AG04450 (cell line): ENCODE measurements at regions of chr7 and their contacts with region 1.

Region 1: GRCh38 chr7:124790645-124791044 is 25.1 kb upstream of the GPR37 start:
- DNase-seq: no peak
- H3K4me3 ChIP-seq: no peak overlapping the region
- H3K27ac ChIP-seq: no peak overlapping the region
- H3K27me3 ChIP-seq: no peaks in the 10 kb centered on the region
- CTCF ChIP-seq: no peak

Region 2: DNA sequence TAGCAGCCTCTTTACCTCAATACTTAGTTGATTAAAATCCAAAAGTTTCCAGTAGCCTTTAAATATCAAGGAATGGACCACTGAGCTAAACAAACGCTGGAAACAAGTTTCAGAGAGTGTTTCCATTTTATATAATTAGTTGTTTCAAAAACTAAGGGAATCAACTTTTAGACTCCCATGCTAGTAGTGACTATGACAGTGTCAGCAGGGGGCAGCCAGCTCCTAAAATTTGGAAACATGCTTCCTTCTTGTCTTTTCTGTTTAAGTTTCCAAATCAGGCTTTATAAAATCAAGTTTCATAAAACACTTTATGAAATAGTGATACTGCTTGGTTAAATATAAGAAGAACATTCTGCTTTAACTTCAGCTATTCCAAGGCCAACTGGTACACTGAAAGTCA is 619.6 kb before region 1 on chr7:
- CTCF ChIA-PET with region 1: interaction called, 100 read pairs
- POLR2A ChIA-PET with region 1: no interaction called
- DNase-seq: peak; percentile 37
- H3K4me3 ChIP-seq: no peak overlapping the region
- H3K27ac ChIP-seq: no peak overlapping the region
- H3K27me3 ChIP-seq: no peaks in the 10 kb centered on the region
- CTCF ChIP-seq: peak; percentile 77